Stomach (tissue), 19 donors: ENCODE measurements at regions of chr4 and their contacts with region 1.

Region 1: DNA sequence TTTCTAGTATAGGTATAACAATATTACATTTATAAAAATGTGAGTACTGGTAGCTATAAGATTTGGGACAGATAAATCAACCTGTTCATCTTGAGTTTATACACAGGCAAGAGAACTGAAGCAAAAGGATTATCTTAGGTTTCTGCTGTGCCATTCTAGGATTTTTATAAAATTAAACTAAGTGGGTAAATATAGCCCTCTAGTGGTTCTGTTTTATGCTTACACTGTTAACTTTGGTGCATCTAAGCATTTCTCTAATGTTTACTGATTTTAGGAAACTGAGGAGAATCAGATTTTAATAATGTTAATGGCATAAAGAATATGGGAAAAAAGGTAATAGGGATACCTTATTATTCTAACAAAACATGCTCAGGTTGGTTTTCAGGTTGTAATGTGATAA is 1.1 kb upstream of the RRH start:
- DNase-seq: peak in 1 of 2 donors; percentile 17
- H3K4me3 ChIP-seq: no peak overlapping the region
- H3K27ac ChIP-seq: no peak overlapping the region
- H3K4me1 ChIP-seq: no peaks in the 10 kb centered on the region
- H3K27me3 ChIP-seq: no peaks in the 10 kb centered on the region
- CTCF ChIP-seq: peak in 5 of 7 experiments; percentile 24 to 47 (median 37)
- EP300 ChIP-seq: no peak
- POLR2A ChIP-seq: no peak

Region 2: DNA sequence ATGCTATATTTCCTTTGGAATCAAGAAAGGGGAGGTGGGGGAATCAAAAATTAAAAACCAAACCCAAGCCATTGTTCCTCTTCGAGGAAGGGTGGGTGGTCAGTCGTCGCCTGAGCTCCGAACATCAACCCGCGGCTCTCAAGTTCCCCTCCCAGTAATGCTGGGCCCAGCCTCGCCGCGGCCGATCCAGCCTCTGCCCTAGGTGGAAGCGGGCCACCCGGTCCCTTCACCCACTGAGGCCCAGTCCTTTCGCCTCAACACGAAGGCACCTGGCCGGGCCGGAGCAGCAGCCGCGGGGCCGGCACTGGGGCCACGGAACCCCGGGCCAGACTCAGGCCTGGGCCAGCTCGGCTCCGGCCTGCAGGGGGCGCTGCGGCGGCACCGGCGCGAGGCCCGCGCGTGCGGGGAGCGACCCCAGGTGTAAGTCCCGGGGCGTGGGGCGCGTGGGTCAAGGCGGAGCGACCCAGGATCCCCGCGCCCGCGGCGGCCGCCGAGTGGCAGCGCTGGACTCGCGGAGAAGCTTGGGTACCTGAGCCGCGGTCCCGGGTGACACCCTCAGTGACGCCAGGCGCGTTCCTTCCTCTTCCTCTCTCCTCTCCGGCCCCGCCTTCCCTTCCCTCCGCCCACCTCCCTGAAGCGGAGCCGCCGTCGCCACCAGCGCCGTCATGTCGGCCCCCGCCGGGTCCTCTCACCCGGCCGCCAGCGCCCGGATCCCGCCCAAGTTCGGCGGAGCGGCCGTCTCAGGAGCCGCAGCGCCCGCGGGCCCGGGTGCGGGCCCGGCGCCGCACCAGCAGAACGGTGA is 393.3 kb before region 1 on chr4 and contains the start of gene SEC24B:
- intact Hi-C with region 1: loop called (anchors 5 kb)
- DNase-seq: peak; percentile 91 to 95
- H3K4me3 ChIP-seq: peak within 1 kb of the TSS; percentile 86 to 97 (median 89)
- H3K27ac ChIP-seq: peak within 1 kb of the TSS; percentile 90 to 99 (median 96)
- H3K4me1 ChIP-seq: peaks cover 26 to 57% (median 46%) of the 10 kb centered on the region in 4 donors
- H3K27me3 ChIP-seq: no peaks in the 10 kb centered on the region
- CTCF ChIP-seq: peak in 5 of 7 experiments; percentile 9 to 95 (median 92)
- EP300 ChIP-seq: no peak
- POLR2A ChIP-seq: no peak
- total RNA-seq, gene SEC24B: 2.3 to 56.0 (median 26.3) TPM

Region 3: DNA sequence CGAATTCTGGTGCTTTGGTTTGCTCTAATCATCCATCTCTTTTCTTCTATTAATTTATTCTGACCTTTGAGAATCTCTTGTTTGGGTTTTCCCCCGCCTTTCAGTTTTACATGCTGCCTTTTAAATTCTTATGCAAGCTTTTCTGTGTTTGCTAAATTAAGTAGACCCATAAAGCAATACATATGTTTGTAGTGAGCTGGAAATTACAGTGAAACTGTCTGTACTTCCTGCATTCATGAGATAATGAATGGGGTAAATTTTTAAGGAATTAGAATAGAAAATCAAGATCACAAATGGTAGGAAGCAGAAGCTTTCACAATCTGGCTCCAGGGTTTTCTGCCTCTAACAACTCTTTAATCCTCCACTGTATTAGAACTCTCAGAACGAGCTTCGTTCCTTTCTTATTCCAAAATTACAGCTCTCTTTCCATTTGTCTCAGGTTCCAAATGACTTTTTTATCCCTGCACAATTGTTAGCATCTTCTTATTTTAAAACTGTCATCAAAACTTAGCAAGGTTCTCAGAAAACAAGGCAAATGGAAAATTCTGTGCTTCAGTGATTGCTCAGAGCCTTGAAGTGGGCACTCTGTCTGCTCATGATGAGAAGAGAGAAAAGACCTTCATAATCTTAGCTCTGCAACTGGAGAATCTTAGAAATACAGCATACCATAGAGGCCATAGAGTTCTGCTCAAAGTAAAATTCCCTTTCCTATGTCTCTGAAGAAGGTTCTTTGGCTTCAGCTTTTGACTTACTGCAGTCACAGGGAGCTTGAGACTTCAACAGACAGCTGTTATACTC is 194.1 kb after region 1 on chr4:
- intact Hi-C with region 1: no loop called
- DNase-seq: no peak
- H3K4me3 ChIP-seq: no peak overlapping the region
- H3K27ac ChIP-seq: no peak overlapping the region
- H3K4me1 ChIP-seq: no peaks in the 10 kb centered on the region
- H3K27me3 ChIP-seq: no peaks in the 10 kb centered on the region
- CTCF ChIP-seq: no peak
- EP300 ChIP-seq: no peak
- POLR2A ChIP-seq: no peak

Region 4: GRCh38 chr4:110344162-110344561 is 517.4 kb after region 1 on chr4:
- intact Hi-C with region 1: no loop called
- DNase-seq: peak in 1 of 2 donors; percentile 9
- H3K4me3 ChIP-seq: no peak overlapping the region
- H3K27ac ChIP-seq: no peak overlapping the region
- H3K4me1 ChIP-seq: no peaks in the 10 kb centered on the region
- H3K27me3 ChIP-seq: no peaks in the 10 kb centered on the region
- CTCF ChIP-seq: no peak
- EP300 ChIP-seq: no peak
- POLR2A ChIP-seq: no peak